CD4-positive, alpha-beta T cell (primary cell): ENCODE measurements at regions of chr18 and their contacts with region 1.

Region 1: GRCh38 chr18:32552421-32553030 is 81.8 kb upstream of the GAREM1 start:
- DNase-seq: peak; percentile 9 to 79 (median 44)
- ATAC-seq: peak; percentile 71
- H3K4me3 ChIP-seq: no peak overlapping the region
- H3K4me3 Mint-ChIP-seq: no peak overlapping the region
- H3K27ac ChIP-seq: no peak overlapping the region
- H3K27ac Mint-ChIP-seq: no peak overlapping the region
- H3K4me1 ChIP-seq: no peaks in the 10 kb centered on the region
- H3K4me1 Mint-ChIP-seq: no peaks in the 10 kb centered on the region
- H3K27me3 ChIP-seq: no peaks in the 10 kb centered on the region
- H3K27me3 Mint-ChIP-seq: peaks cover 21% of the 10 kb centered on the region
- CTCF ChIP-seq: peak; percentile 78

Region 2: DNA sequence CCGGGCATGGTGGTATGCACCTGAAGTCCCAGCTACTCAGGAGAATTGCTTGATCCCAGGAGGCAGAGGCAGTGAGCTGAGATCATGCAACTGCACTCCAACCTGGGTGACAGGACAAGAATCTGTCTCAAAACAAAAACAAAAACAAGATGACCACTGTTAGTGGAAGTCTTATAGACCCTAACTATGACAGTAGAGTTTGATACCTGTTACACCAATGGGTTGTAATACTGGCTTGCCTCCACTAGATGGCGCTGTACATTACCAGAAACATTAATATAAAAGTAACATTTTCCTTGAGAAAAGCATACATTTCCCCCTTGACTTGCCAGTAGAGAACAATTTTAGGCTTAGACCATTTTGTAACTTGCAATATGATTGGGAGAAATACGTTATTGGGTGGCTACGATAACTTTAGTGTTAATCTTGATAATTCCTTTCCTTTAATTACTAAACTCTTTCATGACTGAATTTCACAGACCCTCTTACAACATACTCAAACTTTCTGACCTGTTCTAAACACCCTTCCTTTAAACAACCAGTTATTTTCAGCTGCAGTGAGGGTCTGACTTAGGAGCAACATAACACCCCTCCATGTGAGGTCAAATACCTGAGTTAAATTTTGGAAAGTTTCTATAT is 811.3 kb before region 1 on chr18:
- CTCF ChIA-PET with region 1: no interaction called
- POLR2A ChIA-PET with region 1: no interaction called
- intact Hi-C with region 1: loop called (anchors 2 to 5 kb)
- DNase-seq: peak; percentile 11 to 71 (median 46)
- ATAC-seq: peak; percentile 34
- H3K4me3 ChIP-seq: no peak overlapping the region
- H3K4me3 Mint-ChIP-seq: no peak overlapping the region
- H3K27ac ChIP-seq: no peak overlapping the region
- H3K27ac Mint-ChIP-seq: no peak overlapping the region
- H3K4me1 ChIP-seq: no peaks in the 10 kb centered on the region
- H3K4me1 Mint-ChIP-seq: no peaks in the 10 kb centered on the region
- H3K27me3 ChIP-seq: no peaks in the 10 kb centered on the region
- H3K27me3 Mint-ChIP-seq: peaks cover 4% of the 10 kb centered on the region
- CTCF ChIP-seq: peak; percentile 95

Region 3: GRCh38 chr18:32158108-32158624 is 394.4 kb before region 1 on chr18:
- CTCF ChIA-PET with region 1: interaction called, 47 read pairs
- POLR2A ChIA-PET with region 1: interaction called, 3 read pairs
- intact Hi-C with region 1: loop called (anchors 1 kb)
- DNase-seq: peak; percentile 53 to 87 (median 60)
- ATAC-seq: peak; percentile 93
- H3K4me3 ChIP-seq: peak overlapping the region; percentile 45
- H3K4me3 Mint-ChIP-seq: peak overlapping the region; percentile 71
- H3K27ac ChIP-seq: no peak overlapping the region
- H3K27ac Mint-ChIP-seq: no peak overlapping the region
- H3K4me1 ChIP-seq: peaks cover 7% of the 10 kb centered on the region
- H3K4me1 Mint-ChIP-seq: peaks cover 5% of the 10 kb centered on the region
- H3K27me3 ChIP-seq: peaks cover 0 to 3% of the 10 kb centered on the region in 2 experiments
- H3K27me3 Mint-ChIP-seq: peaks cover 9% of the 10 kb centered on the region
- CTCF ChIP-seq: peak; percentile 86

Region 4: DNA sequence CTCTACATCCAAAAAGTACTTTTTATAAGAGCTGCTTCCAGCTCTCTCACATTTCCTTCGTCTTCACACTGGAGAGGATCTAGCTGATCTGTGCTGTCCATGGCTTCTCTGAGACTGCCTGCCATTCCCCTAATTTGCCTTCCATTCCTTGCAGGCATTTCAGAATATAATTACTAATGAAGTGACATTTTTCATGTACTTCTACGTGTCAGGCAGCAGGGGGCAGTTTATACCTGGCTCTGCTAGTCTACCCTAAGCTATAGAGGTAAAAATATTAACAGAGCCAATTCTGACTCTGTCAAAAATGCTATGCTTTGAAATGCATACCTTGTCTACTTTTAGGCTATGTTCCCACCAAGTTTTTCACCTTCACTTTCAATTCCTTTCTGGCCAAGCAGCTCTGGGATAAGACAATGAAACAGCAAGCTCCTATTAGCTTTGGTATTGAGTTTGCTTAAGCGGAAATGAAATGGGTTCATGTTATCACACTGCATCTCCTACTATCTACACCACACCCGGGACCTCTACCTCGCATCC is 280.8 kb before region 1 on chr18:
- CTCF ChIA-PET with region 1: interaction called, 4 read pairs
- POLR2A ChIA-PET with region 1: no interaction called
- intact Hi-C with region 1: loop called (anchors 1 to 2 kb)
- DNase-seq: peak in 4 of 14 experiments; percentile 13 to 28 (median 22)
- ATAC-seq: peak; percentile 37
- H3K4me3 ChIP-seq: no peak overlapping the region
- H3K4me3 Mint-ChIP-seq: no peak overlapping the region
- H3K27ac ChIP-seq: no peak overlapping the region
- H3K27ac Mint-ChIP-seq: no peak overlapping the region
- H3K4me1 ChIP-seq: no peaks in the 10 kb centered on the region
- H3K4me1 Mint-ChIP-seq: no peaks in the 10 kb centered on the region
- H3K27me3 ChIP-seq: peaks cover 0 to 5% of the 10 kb centered on the region in 2 experiments
- H3K27me3 Mint-ChIP-seq: peaks cover 30% of the 10 kb centered on the region
- CTCF ChIP-seq: peak; percentile 58

Region 5: DNA sequence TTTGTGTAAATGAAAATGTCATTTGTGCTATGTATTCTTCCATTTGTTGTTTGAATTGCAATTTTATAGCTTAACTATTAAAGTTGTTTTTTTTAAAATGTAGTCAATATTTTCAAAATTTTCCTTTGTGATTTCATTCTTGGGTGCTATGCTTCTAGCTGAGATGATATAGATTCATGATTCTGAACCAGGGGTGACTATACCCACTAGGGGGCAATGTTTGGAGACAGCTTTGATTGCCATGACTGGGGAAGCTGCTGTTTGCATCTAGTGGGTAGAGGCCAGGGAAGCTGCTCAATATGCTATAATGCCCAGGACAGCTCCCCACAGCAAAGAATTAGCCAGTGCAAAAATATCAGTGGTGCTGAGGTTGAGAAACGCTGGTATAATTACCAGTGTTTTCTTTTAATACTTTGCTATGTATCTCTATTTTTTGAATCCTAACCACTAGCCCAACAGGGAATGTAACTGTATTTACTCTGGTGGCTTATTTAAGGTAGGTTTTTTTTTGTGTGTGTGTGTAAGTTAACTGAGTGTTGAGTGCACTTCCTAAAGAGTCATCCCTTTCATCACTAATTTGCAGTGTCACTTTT is 262.9 kb before region 1 on chr18:
- CTCF ChIA-PET with region 1: interaction called, 4 read pairs
- POLR2A ChIA-PET with region 1: no interaction called
- intact Hi-C with region 1: loop called in 1 of 2 experiments (anchors 5 kb)
- DNase-seq: peak in 8 of 14 experiments; percentile 2 to 50 (median 22)
- ATAC-seq: no peak
- H3K4me3 ChIP-seq: no peak overlapping the region
- H3K4me3 Mint-ChIP-seq: no peak overlapping the region
- H3K27ac ChIP-seq: no peak overlapping the region
- H3K27ac Mint-ChIP-seq: no peak overlapping the region
- H3K4me1 ChIP-seq: no peaks in the 10 kb centered on the region
- H3K4me1 Mint-ChIP-seq: no peaks in the 10 kb centered on the region
- H3K27me3 ChIP-seq: peaks cover 0 to 3% of the 10 kb centered on the region in 2 experiments
- H3K27me3 Mint-ChIP-seq: peaks cover 20% of the 10 kb centered on the region
- CTCF ChIP-seq: peak; percentile 49